Head of caudate nucleus (tissue), 42 donors: ENCODE measurements at regions of chr3 and their contacts with region 1.

Region 1: DNA sequence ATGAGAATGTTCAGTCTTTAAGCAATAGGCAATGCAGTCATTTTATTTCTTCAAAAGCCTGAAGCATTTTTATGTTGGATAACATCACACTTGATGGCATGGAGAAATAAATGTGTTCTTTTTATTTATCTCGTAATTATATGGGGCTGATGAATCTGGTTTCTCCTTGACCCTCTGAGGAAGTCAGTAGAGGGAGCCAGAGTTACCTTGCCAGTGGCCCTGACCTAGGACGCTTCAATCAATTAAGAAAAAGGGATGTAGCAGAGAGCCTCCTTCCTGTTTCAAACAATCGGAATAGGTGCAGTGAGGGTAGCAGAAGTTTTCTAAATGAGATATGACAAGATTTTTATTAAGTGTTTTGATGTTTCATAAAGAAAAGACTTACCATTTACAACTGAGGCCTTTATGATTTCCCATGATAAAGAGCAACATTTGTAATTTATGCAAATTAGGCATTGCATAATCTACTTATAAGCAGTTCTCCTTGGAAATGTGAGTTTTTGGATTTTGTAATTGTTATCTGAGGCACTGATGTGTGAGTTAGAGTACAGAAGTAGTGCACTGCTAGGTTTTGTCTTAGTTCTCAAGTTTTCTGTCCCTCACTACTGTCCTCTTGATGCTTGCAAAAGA is 129.1 kb downstream of the RAP2B start:
- DNase-seq: no peak

Region 2: GRCh38 chr3:153161138-153161713 is 129.9 kb before region 1 on chr3:
- intact Hi-C with region 1: loop called (anchors 5 kb)
- DNase-seq: peak; percentile 74 to 97 (median 92)